Gastrocnemius medialis (tissue), 4 donors: ENCODE measurements at regions of chr3 and their contacts with region 1.

Region 1: GRCh38 chr3:57597122-57597923 is at the start of gene ARF4:
- DNase-seq: peak; percentile 99 to 100
- ATAC-seq: peak; percentile 92 to 94
- H3K4me3 ChIP-seq: peak within 1 kb of the TSS; percentile 72 to 96 (median 92)
- H3K27ac ChIP-seq: peak within 1 kb of the TSS; percentile 95 to 99 (median 98)
- H3K4me1 ChIP-seq: peaks cover 44 to 48% of the 10 kb centered on the region in 2 donors
- H3K27me3 ChIP-seq: no peaks in the 10 kb centered on the region
- CTCF ChIP-seq: peak in 2 of 5 experiments; percentile 7 to 8
- POLR2A ChIP-seq: peak; percentile 97 to 98
- total RNA-seq, gene ARF4: 36.2 to 55.2 (median 47.7) TPM

Region 2: DNA sequence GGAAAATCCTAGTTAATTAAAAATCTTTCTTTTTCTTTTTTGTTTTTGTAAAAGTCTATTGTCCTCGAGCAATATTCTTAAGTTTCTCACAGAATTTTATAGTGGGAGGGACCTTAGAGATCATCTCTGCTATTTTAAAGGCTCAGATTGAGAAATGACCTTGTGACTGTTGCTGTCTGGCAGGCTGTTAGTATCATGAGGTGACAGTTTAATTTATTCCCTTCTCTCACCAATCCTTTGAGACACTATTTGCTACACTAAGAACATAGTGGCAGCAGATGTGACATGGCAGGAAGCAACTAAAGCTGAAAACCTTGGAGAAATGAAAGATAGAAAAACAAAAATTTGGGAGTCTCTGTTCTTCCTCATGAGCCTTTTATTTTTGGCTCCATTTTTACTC is 344.9 kb before region 1 on chr3:
- in situ Hi-C with region 1: no loop called
- intact Hi-C with region 1: loop called (anchors 2 kb)
- DNase-seq: peak; percentile 51 to 63
- ATAC-seq: peak; percentile 98
- H3K4me3 ChIP-seq: no peak overlapping the region
- H3K27ac ChIP-seq: peak overlapping the region; percentile 84 to 87 (median 86)
- H3K4me1 ChIP-seq: peaks cover 22 to 23% of the 10 kb centered on the region in 2 donors
- H3K27me3 ChIP-seq: no peaks in the 10 kb centered on the region
- CTCF ChIP-seq: no peak
- POLR2A ChIP-seq: peak; percentile 14 to 21

Region 3: GRCh38 chr3:57421336-57421735 is 176.0 kb before region 1 on chr3:
- in situ Hi-C with region 1: no loop called
- intact Hi-C with region 1: no loop called
- DNase-seq: no peak
- ATAC-seq: no peak
- H3K4me3 ChIP-seq: no peak overlapping the region
- H3K27ac ChIP-seq: no peak overlapping the region
- H3K4me1 ChIP-seq: no peaks in the 10 kb centered on the region
- H3K27me3 ChIP-seq: no peaks in the 10 kb centered on the region
- CTCF ChIP-seq: no peak
- POLR2A ChIP-seq: no peak

Region 4: GRCh38 chr3:57555738-57556458 is 41.4 kb before region 1 on chr3 and contains the start of gene PDE12:
- in situ Hi-C with region 1: loop called in 2 of 4 experiments (anchors 5 kb)
- intact Hi-C with region 1: loop called (anchors 1 kb)
- DNase-seq: peak; percentile 82 to 85
- ATAC-seq: peak; percentile 96 to 98
- H3K4me3 ChIP-seq: peak within 1 kb of the TSS; percentile 75 to 94 (median 83)
- H3K27ac ChIP-seq: peak within 1 kb of the TSS; percentile 90 to 98 (median 94)
- H3K4me1 ChIP-seq: peaks cover 20 to 28% of the 10 kb centered on the region in 2 donors
- H3K27me3 ChIP-seq: no peaks in the 10 kb centered on the region
- CTCF ChIP-seq: no peak
- POLR2A ChIP-seq: peak; percentile 91 to 92
- total RNA-seq, gene PDE12: 16.5 to 25.7 (median 19.8) TPM

Region 5: GRCh38 chr3:57616233-57616632 is 18.9 kb after region 1 on chr3:
- in situ Hi-C with region 1: no loop called
- intact Hi-C with region 1: no loop called
- DNase-seq: no peak
- ATAC-seq: no peak
- H3K4me3 ChIP-seq: no peak overlapping the region
- H3K27ac ChIP-seq: no peak overlapping the region
- H3K4me1 ChIP-seq: no peaks in the 10 kb centered on the region
- H3K27me3 ChIP-seq: no peaks in the 10 kb centered on the region
- CTCF ChIP-seq: no peak
- POLR2A ChIP-seq: no peak

Region 6: GRCh38 chr3:57692259-57693147 is 95.2 kb after region 1 on chr3 and contains the start of gene DENND6A:
- in situ Hi-C with region 1: loop called in 1 of 4 experiments (anchors 10 kb)
- intact Hi-C with region 1: loop called (anchors 2 kb)
- DNase-seq: peak; percentile 74 to 79
- ATAC-seq: peak; percentile 61 to 72
- H3K4me3 ChIP-seq: peak within 1 kb of the TSS; percentile 67 to 98 (median 83)
- H3K27ac ChIP-seq: peak within 1 kb of the TSS; percentile 87 to 100 (median 94)
- H3K4me1 ChIP-seq: peaks cover 37 to 43% of the 10 kb centered on the region in 2 donors
- H3K27me3 ChIP-seq: no peaks in the 10 kb centered on the region
- CTCF ChIP-seq: peak in 1 of 5 experiments; percentile 45
- POLR2A ChIP-seq: peak; percentile 98
- total RNA-seq, gene DENND6A: 6.4 to 18.9 (median 14.9) TPM

Region 7: GRCh38 chr3:57889807-57890206 is 292.5 kb after region 1 on chr3:
- in situ Hi-C with region 1: no loop called
- intact Hi-C with region 1: loop called (anchors 5 kb)
- DNase-seq: no peak
- ATAC-seq: peak in 1 of 2 donors; percentile 57
- H3K4me3 ChIP-seq: peak overlapping the region; percentile 37 to 48 (median 45)
- H3K27ac ChIP-seq: peak overlapping the region; percentile 81 to 88 (median 86)
- H3K4me1 ChIP-seq: peaks cover 27% of the 10 kb centered on the region in 2 donors
- H3K27me3 ChIP-seq: no peaks in the 10 kb centered on the region
- CTCF ChIP-seq: no peak
- POLR2A ChIP-seq: no peak

Region 8: DNA sequence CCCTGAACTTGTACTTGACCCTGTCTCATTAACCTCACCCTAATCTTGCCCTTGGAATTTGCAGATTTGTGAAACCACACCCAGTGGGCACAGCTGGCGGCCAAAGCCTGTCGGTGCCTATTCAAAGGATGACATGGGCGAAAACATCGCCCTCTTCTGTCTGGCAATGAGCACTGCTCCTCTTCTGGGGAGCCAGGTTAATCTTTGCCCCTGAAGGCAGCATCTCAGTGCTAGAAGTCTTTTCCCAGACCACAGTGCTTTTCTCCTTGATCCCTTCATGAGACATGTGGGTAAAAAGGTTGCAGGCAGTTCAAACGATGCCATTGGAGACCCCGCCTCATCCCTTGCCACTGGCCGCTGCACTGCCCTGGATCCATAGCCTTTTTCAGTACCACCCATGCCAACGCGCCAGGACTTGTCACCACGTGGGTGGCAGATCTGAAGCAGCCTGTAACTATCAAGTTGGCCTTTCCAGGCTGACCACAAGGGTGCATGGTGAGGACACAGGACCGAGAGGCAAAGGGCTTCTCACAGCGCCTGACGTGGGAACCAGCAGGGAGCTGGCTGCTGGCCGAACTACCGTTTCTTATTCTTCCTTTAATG is 620.0 kb after region 1 on chr3:
- in situ Hi-C with region 1: no loop called
- intact Hi-C with region 1: no loop called
- DNase-seq: peak; percentile 40 to 46
- ATAC-seq: peak; percentile 83 to 84
- H3K4me3 ChIP-seq: no peak overlapping the region
- H3K27ac ChIP-seq: peak overlapping the region in 3 of 4 donors; percentile 14 to 47 (median 30)
- H3K4me1 ChIP-seq: peaks cover 5 to 10% of the 10 kb centered on the region in 2 donors
- H3K27me3 ChIP-seq: no peaks in the 10 kb centered on the region
- CTCF ChIP-seq: peak; percentile 42 to 71 (median 63)
- POLR2A ChIP-seq: no peak